ENCODE measurements at regions of chr14 and their contacts with region 1.

Region 1: GRCh38 chr14:77301103-77301502 is 19.6 kb downstream of the POMT2 start:
- DNase-seq: peak; percentile 84
- ATAC-seq: no peak
- H3K4me3 Mint-ChIP-seq: no peak overlapping the region
- H3K27ac Mint-ChIP-seq: no peak overlapping the region
- H3K4me1 Mint-ChIP-seq: peaks cover 24% of the 10 kb centered on the region
- H3K27me3 Mint-ChIP-seq: no peaks in the 10 kb centered on the region

Region 2: DNA sequence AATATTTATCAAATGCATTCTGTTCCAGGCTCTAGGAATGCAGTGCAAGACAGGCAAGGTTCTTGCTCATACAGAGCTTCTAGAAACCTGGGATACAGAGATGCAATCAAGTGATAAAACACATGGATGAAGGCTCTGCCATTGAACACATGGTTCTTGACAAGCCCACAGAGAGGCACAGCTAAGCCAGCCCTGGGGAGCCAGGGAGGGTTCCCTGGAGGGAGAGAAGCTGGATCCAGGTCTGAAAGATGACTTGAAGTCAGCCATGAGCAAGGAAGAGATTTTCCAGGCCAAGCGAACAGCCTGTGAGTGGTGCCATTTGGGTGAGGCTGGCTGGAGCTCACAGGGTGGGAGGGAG is 338.8 kb before region 1 on chr14:
- CTCF ChIA-PET with region 1: no interaction called
- POLR2A ChIA-PET with region 1: no interaction called
- intact Hi-C with region 1: loop called (anchors 5 to 10 kb)
- DNase-seq: no peak
- ATAC-seq: peak; percentile 15
- H3K4me3 Mint-ChIP-seq: peak overlapping the region; percentile 62
- H3K27ac Mint-ChIP-seq: peak overlapping the region; percentile 99
- H3K4me1 Mint-ChIP-seq: peaks cover 86% of the 10 kb centered on the region
- H3K27me3 Mint-ChIP-seq: no peaks in the 10 kb centered on the region

Region 3: DNA sequence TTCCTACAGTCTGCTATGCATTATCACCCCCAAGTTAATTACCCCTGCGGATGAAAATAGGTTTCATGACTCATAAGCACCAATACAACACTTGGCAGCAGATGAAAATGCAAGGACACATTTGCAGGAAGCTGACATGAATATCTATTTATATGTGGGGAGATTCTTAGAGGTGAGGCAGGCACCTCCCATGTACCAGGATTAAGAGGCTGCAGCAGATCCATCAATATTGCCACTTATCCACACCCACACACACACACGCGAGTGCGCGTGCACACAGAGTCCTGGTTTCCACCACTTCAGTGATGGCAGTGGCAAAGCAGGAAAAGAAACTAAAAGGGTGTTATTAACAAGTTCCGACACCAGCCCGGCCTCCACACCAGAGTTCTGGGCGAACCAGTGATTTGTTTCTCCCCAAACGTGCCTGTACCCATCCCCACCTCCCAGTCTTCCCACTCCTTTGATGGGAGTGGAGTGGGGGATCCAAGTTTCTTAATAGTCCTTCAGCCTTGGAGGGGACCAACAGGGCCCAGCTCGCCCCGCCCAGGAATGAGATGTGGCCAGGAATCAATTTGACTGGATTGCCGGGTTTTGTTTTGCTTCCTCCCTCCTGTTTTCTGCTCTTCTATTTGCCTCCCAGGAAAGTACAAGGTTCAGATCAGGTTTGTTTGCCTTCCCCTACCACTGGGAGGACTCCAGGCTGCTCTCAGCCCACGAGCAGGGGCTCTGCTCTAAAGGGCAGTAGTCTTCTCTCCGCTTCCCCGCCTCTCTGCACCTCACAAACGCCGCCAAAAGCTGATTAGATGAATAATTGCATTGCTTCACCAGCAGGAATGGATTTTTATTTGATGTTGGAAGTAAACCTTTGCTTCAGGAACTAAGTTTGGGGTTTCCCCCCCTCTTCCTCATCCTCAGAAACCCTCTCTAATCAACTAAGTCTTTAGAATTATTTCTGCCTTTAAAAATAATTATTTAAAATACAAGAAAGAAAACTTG is 277.8 kb before region 1 on chr14:
- CTCF ChIA-PET with region 1: no interaction called
- POLR2A ChIA-PET with region 1: no interaction called
- intact Hi-C with region 1: loop called in 1 of 2 experiments (anchors 5 kb)
- DNase-seq: peak; percentile 77
- ATAC-seq: peak; percentile 24
- H3K4me3 Mint-ChIP-seq: peak overlapping the region; percentile 59
- H3K27ac Mint-ChIP-seq: peak overlapping the region; percentile 81
- H3K4me1 Mint-ChIP-seq: peaks cover 43% of the 10 kb centered on the region
- H3K27me3 Mint-ChIP-seq: no peaks in the 10 kb centered on the region

Region 4: GRCh38 chr14:77151918-77152588 is 149.1 kb before region 1 on chr14:
- CTCF ChIA-PET with region 1: interaction called, 11 read pairs
- POLR2A ChIA-PET with region 1: no interaction called
- intact Hi-C with region 1: loop called in 1 of 2 experiments (anchors 5 kb)
- DNase-seq: no peak
- ATAC-seq: peak; percentile 69
- H3K4me3 Mint-ChIP-seq: no peak overlapping the region
- H3K27ac Mint-ChIP-seq: no peak overlapping the region
- H3K4me1 Mint-ChIP-seq: no peaks in the 10 kb centered on the region
- H3K27me3 Mint-ChIP-seq: peaks cover 34% of the 10 kb centered on the region

Region 5: GRCh38 chr14:77320238-77320935 is 19.3 kb after region 1 on chr14 and contains the start of gene POMT2:
- CTCF ChIA-PET with region 1: interaction called, 176 read pairs
- POLR2A ChIA-PET with region 1: interaction called, 8 read pairs
- intact Hi-C with region 1: loop called (anchors 1 kb)
- DNase-seq: peak; percentile 95
- ATAC-seq: peak; percentile 53
- H3K4me3 Mint-ChIP-seq: peak within 1 kb of the TSS; percentile 92
- H3K27ac Mint-ChIP-seq: peak within 1 kb of the TSS; percentile 99
- H3K4me1 Mint-ChIP-seq: peaks cover 19% of the 10 kb centered on the region
- H3K27me3 Mint-ChIP-seq: no peaks in the 10 kb centered on the region
- total RNA-seq, gene POMT2: 11.7 to 18.2 TPM

Region 6: DNA sequence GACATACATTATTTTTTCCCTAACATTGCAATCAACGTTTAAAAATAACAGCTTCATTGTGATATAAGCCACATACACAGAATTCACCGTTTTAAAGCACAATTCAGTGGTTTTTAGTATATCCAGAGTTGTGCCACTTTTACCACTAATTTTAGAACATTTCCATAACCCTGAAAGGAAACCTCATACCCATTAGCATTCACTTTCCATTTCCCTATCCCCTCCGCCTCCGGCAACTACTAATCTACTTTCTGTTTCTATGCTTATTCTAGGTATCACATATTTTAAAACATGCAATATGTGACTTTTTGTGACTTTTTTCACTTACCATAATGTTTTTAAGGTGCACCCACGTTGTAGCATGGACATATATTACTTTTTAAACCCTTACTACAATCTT is 253.1 kb after region 1 on chr14:
- CTCF ChIA-PET with region 1: no interaction called
- POLR2A ChIA-PET with region 1: no interaction called
- intact Hi-C with region 1: loop called in 1 of 2 experiments (anchors 1 kb)
- DNase-seq: peak; percentile 33
- ATAC-seq: peak; percentile 63
- H3K4me3 Mint-ChIP-seq: no peak overlapping the region
- H3K27ac Mint-ChIP-seq: peak overlapping the region; percentile 78
- H3K4me1 Mint-ChIP-seq: peaks cover 20% of the 10 kb centered on the region
- H3K27me3 Mint-ChIP-seq: no peaks in the 10 kb centered on the region